MCF 10A (cell line): ENCODE measurements at regions of chr12 and their contacts with region 1.

Region 1: GRCh38 chr12:77685112-77685511 is 145.6 kb upstream of the NAV3 start:
- DNase-seq: peak; percentile 83
- H3K4me3 Mint-ChIP-seq: no peak overlapping the region
- H3K27ac Mint-ChIP-seq: no peak overlapping the region
- H3K4me1 Mint-ChIP-seq: no peaks in the 10 kb centered on the region
- H3K27me3 Mint-ChIP-seq: no peaks in the 10 kb centered on the region
- CTCF ChIP-seq: peak; percentile 62

Region 2: DNA sequence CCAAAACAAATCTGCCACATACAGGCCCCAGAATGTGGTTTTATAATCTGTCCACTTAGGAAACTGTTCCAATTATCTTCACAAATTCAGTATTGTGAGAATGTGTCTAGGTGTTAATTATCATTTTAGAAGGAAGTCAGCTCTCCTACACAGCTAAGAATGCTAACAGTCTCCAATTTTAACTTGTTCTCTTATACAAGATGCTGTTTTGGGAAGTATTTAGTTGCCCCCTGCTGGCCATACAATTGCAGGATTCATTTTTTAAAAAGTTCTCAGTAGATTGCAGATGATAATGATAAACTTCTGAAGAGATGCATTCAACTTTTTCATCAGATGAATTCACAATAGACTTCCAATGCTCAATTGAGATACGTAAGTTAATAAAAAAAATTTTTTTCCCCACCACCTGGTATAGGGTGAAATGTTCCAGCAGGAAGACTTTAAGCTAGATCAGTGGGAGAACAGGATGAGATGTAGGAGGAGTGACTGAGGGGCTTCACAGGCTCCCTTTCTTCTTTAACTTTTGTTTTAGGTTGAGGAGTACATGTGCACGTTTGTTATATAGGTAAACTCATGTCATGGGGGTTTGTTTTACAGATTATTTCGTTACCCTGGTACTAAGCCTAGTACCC is 1098.2 kb before region 1 on chr12:
- CTCF ChIA-PET with region 1: no interaction called
- POLR2A ChIA-PET with region 1: no interaction called
- intact Hi-C with region 1: no loop called
- DNase-seq: peak; percentile 61
- H3K4me3 Mint-ChIP-seq: no peak overlapping the region
- H3K27ac Mint-ChIP-seq: peak overlapping the region; percentile 79
- H3K4me1 Mint-ChIP-seq: peaks cover 35% of the 10 kb centered on the region
- H3K27me3 Mint-ChIP-seq: no peaks in the 10 kb centered on the region
- CTCF ChIP-seq: peak; percentile 65

Region 3: DNA sequence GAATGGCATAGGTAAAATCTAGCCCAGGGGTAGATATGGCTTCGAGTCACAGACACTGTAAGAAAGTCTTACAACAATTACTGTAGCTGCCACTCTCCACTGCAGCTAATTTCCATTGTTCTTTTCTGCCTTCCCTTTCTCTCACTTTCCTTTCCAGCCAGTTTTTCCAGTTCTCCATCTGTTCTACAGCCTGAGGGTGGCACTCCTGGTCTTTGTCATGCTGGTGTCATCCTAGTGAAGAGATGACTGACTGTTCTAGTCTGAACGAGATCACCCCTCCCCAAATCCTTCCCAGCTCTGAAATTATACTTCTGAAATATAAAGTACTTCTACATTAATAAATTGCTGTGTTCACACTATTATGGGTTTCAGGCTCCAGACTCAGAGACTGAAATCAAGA is 732.1 kb before region 1 on chr12:
- CTCF ChIA-PET with region 1: interaction called, 3 read pairs
- POLR2A ChIA-PET with region 1: no interaction called
- intact Hi-C with region 1: loop called (anchors 1 kb)
- DNase-seq: peak; percentile 30
- H3K4me3 Mint-ChIP-seq: no peak overlapping the region
- H3K27ac Mint-ChIP-seq: no peak overlapping the region
- H3K4me1 Mint-ChIP-seq: no peaks in the 10 kb centered on the region
- H3K27me3 Mint-ChIP-seq: no peaks in the 10 kb centered on the region
- CTCF ChIP-seq: peak; percentile 16

Region 4: GRCh38 chr12:77065361-77066204 is 619.5 kb before region 1 on chr12 and contains the start of gene E2F7:
- CTCF ChIA-PET with region 1: interaction called, 4 read pairs
- POLR2A ChIA-PET with region 1: no interaction called
- intact Hi-C with region 1: loop called (anchors 5 kb)
- DNase-seq: peak; percentile 94
- H3K4me3 Mint-ChIP-seq: peak within 1 kb of the TSS; percentile 69
- H3K27ac Mint-ChIP-seq: peak within 1 kb of the TSS; percentile 77
- H3K4me1 Mint-ChIP-seq: peaks cover 37% of the 10 kb centered on the region
- H3K27me3 Mint-ChIP-seq: no peaks in the 10 kb centered on the region
- CTCF ChIP-seq: no peak
- total RNA-seq, gene E2F7: 23.5 and 34.4 TPM in 2 replicates

Region 5: DNA sequence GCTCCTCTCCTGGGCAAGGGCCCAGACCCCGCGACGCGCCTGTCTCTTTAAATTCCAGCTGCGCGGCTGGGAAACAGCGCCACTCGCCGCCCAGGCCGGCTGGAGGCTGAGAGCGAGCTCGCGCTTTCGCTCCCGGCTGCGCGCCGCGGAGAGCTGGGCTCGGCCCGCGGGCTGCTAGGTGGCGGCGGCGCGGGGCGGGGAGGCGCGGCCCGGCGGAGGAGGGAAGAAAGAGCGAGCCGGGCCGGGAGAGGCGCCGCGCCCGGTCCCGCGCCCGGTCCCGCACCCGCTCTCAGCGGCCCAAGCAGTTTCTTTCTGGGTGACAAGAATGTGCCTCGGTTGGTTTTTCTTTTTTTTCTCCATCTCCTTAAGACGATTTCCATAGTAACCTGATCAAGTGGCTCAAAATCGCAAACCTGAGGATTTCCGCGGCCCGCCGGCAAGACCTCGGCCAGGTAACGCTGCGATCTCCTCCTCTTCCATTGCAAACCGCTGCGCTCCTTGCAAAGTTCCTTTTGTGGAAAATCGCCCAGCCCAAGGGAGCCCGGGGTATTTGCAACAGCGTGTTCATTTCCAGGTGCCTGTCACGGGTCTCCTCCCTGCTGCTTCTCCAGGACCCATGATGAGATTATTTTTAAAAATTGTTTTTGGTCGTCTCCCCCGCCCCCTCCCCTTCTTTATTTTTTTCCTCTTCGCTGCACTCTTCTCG is 360.2 kb before region 1 on chr12:
- CTCF ChIA-PET with region 1: interaction called, 8 read pairs
- POLR2A ChIA-PET with region 1: no interaction called
- intact Hi-C with region 1: loop called (anchors 1 kb)
- DNase-seq: peak; percentile 75
- H3K4me3 Mint-ChIP-seq: peak overlapping the region; percentile 91
- H3K27ac Mint-ChIP-seq: peak overlapping the region; percentile 53
- H3K4me1 Mint-ChIP-seq: peaks cover 14% of the 10 kb centered on the region
- H3K27me3 Mint-ChIP-seq: peaks cover 13% of the 10 kb centered on the region
- CTCF ChIP-seq: peak; percentile 31

Region 6: GRCh38 chr12:77625441-77625840 is 59.7 kb before region 1 on chr12:
- CTCF ChIA-PET with region 1: interaction called, 10 read pairs
- POLR2A ChIA-PET with region 1: no interaction called
- intact Hi-C with region 1: no loop called
- DNase-seq: peak; percentile 85
- H3K4me3 Mint-ChIP-seq: no peak overlapping the region
- H3K27ac Mint-ChIP-seq: peak overlapping the region; percentile 60
- H3K4me1 Mint-ChIP-seq: peaks cover 6% of the 10 kb centered on the region
- H3K27me3 Mint-ChIP-seq: no peaks in the 10 kb centered on the region
- CTCF ChIP-seq: no peak

Region 7: DNA sequence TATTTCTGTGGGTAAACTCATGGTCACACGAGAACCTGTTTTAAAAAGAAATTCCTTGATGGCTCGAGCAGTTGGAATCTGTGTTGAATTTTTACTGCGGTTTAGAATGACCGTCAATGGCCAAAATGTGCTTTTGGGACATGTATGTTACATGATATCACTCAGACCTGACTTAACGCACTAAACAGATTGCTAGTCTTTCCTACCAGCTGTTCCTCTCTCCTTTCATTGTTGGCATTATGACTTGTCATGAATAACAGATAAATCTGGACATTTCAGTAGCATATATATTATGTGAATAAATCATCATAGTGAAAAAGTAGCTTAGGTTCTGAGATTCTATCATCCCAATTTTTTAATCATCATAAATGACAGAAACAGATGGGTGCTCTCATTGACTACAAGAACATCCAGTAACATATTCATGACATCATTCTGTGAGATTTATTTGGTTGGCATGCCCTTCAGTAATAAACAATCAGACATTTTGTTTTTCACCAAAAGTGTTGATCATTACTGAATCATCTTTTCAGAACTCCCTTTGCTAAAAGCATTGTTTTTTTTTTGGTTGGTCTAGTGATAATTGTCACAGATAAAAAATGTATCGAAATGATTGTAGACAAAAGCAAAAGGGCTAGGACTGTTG is 87.7 kb after region 1 on chr12:
- CTCF ChIA-PET with region 1: no interaction called
- POLR2A ChIA-PET with region 1: no interaction called
- intact Hi-C with region 1: no loop called
- DNase-seq: no peak
- H3K4me3 Mint-ChIP-seq: no peak overlapping the region
- H3K27ac Mint-ChIP-seq: no peak overlapping the region
- H3K4me1 Mint-ChIP-seq: no peaks in the 10 kb centered on the region
- H3K27me3 Mint-ChIP-seq: no peaks in the 10 kb centered on the region
- CTCF ChIP-seq: no peak

Region 8: DNA sequence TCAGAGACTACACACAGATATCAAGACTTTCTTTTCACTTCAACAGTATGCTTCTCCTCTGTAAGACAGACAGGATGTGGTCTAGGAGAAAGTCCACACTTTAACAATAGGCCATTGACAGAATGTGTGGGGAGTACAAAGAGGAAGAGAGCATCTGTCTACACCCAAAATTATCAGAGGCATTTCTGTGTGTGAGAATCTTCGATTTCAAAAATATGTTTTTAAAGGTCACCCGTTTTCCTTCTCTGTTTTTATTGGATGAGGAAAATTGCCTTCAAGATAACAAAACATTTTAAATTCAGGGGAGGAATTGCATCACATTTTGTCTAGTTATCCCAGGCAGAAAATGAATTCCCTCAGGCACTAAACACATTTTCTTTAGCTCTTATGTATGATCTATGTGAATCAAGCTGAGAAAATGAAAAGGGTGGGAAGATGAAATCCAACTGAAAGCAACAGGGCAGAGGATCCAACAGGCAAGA is 162.0 kb after region 1 on chr12:
- CTCF ChIA-PET with region 1: no interaction called
- POLR2A ChIA-PET with region 1: no interaction called
- intact Hi-C with region 1: no loop called
- DNase-seq: peak; percentile 57
- H3K4me3 Mint-ChIP-seq: no peak overlapping the region
- H3K27ac Mint-ChIP-seq: peak overlapping the region; percentile 89
- H3K4me1 Mint-ChIP-seq: peaks cover 21% of the 10 kb centered on the region
- H3K27me3 Mint-ChIP-seq: no peaks in the 10 kb centered on the region
- CTCF ChIP-seq: no peak